ENCODE measurements at regions of chr9 and their contacts with region 1.

Region 1: DNA sequence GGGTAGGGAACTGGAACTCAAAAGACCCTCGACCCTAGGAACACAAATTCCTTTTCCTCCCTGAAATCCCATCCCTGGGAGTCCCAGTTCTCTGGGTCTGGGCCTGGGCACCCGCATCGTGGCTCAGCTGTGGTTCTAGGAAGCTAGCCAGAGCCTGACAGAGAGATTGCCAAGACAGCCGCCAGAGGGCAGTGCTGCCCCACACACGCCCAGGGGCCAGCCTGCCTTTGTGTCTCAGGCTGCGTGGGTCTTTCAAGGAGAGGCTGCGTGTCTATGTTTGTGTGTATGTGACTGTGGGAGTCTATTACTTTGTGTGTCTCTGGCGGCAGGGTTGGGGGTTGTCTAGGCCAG is 32.0 kb upstream of the TTLL11 start:
- DNase-seq: peak; percentile 96
- H3K27ac ChIP-seq: peak overlapping the region; percentile 44; the same call in 1 of the 2 replicates
- CTCF ChIP-seq: peak; percentile 100

Region 2: GRCh38 chr9:121929893-121930875 is 194.9 kb before region 1 on chr9:
- CTCF ChIA-PET with region 1: no interaction called
- POLR2A ChIA-PET with region 1: no interaction called
- DNase-seq: no peak
- H3K27ac ChIP-seq: no peak overlapping the region
- CTCF ChIP-seq: no peak

Region 3: DNA sequence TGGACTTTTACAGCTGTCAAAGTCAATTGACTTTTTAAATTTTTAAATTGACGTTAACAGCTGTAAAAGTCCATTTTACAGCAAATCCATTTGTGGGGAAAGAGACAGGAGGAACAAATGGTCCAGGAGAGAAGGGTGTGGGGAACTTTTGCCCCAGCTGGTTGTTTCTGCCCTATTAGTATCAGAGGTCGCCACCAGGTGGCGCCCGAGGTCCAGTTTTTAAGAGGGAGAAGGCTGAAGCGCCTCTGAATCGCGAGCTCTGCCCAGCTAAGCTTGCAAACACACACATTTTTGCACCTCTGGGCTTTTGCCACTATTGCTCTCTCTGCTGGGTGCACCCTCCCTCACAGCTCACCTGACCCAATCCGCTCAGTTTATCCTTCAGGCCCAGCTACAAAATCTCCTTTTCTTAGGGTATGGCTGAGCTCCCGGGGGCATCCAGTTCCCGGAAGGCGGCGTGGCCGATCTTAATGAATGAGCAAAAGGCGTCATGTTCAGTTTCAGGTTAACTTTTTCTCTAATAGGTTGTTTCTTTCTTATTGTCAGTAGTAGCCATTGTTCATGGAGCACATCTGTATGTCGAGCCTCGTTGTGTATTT is 25.8 kb before region 1 on chr9:
- CTCF ChIA-PET with region 1: interaction called, 99 read pairs
- POLR2A ChIA-PET with region 1: no interaction called
- DNase-seq: peak; percentile 88
- H3K27ac ChIP-seq: no peak overlapping the region
- CTCF ChIP-seq: peak; percentile 97

Measured in RWPE1 (cell line).